HEK293 (cell line): ENCODE measurements at regions of chr1 and their contacts with region 1.

Region 1: DNA sequence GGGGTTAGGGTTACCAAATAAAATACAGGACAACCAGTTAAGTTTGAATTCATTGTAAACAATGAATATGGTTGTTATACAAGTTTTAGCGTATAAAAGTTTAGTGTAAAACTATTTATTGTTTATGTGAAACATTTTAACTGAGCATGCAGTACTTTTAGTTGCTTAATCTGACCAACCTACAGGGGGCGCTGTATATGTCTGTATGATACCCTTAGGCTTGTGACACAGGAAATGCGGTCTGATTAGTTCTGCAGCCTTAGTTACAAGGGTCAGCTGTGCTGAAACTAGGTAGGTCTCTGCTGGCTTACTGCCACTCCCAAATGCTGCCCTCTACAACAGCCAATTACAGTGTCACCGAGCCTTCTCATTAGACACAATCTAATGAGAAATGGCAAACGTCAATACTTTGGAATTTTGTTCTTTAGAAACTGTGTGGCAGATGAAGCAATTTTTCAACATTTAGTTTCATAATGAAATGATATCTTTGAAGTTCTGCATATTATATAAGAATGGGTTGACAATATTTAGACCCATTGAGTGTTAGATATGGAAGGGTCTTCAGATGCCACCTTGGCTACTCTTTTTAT is 56.2 kb downstream of the NTNG1 start:
- H3K4me3 ChIP-seq: no peak overlapping the region
- H3K27ac ChIP-seq: no peak overlapping the region
- H3K4me1 ChIP-seq: no peaks in the 10 kb centered on the region
- CTCF ChIP-seq: no peak

Region 2: GRCh38 chr1:107183011-107183410 is 14.1 kb before region 1 on chr1:
- CTCF ChIA-PET with region 1: interaction called, 15 read pairs
- POLR2A ChIA-PET with region 1: no interaction called
- H3K4me3 ChIP-seq: no peak overlapping the region
- H3K27ac ChIP-seq: no peak overlapping the region
- H3K4me1 ChIP-seq: no peaks in the 10 kb centered on the region
- CTCF ChIP-seq: no peak

Region 3: GRCh38 chr1:107213225-107213624 is 16.2 kb after region 1 on chr1:
- CTCF ChIA-PET with region 1: interaction called, 14 read pairs
- POLR2A ChIA-PET with region 1: no interaction called
- H3K4me3 ChIP-seq: no peak overlapping the region
- H3K27ac ChIP-seq: no peak overlapping the region
- H3K4me1 ChIP-seq: no peaks in the 10 kb centered on the region
- CTCF ChIP-seq: no peak

Region 4: GRCh38 chr1:107389410-107390396 is 192.6 kb after region 1 on chr1:
- CTCF ChIA-PET with region 1: no interaction called
- POLR2A ChIA-PET with region 1: no interaction called
- H3K4me3 ChIP-seq: no peak overlapping the region
- H3K27ac ChIP-seq: no peak overlapping the region
- H3K4me1 ChIP-seq: no peaks in the 10 kb centered on the region
- CTCF ChIP-seq: no peak